Heart left ventricle (tissue), 16 donors: ENCODE measurements at regions of chr15 and their contacts with region 1.

Region 1: GRCh38 chr15:51793521-51794305 is 35.7 kb upstream of the TMOD3 start:
- DNase-seq: peak; percentile 49 to 73 (median 62)
- ATAC-seq: peak in 3 of 4 donors; percentile 39 to 68 (median 59)
- H3K4me3 ChIP-seq: no peak overlapping the region
- H3K27ac ChIP-seq: peak overlapping the region in 5 of 12 donors; percentile 14 to 32 (median 21)
- H3K4me1 ChIP-seq: peaks cover 0 to 19% (median 5%) of the 10 kb centered on the region in 12 donors
- H3K27me3 ChIP-seq: no peaks in the 10 kb centered on the region
- CTCF ChIP-seq: no peak
- POLR2A ChIP-seq: no peak

Region 2: GRCh38 chr15:51874751-51875528 is 81.2 kb after region 1 on chr15:
- intact Hi-C with region 1: loop called in 2 of 10 experiments (anchors 5 kb)
- DNase-seq: no peak
- ATAC-seq: peak; percentile 29 to 89 (median 78)
- H3K4me3 ChIP-seq: no peak overlapping the region
- H3K27ac ChIP-seq: peak overlapping the region in 9 of 12 donors; percentile 26 to 74 (median 39)
- H3K4me1 ChIP-seq: peaks cover 0 to 37% (median 25%) of the 10 kb centered on the region in 12 donors
- H3K27me3 ChIP-seq: no peaks in the 10 kb centered on the region
- CTCF ChIP-seq: no peak
- POLR2A ChIP-seq: no peak

Region 3: DNA sequence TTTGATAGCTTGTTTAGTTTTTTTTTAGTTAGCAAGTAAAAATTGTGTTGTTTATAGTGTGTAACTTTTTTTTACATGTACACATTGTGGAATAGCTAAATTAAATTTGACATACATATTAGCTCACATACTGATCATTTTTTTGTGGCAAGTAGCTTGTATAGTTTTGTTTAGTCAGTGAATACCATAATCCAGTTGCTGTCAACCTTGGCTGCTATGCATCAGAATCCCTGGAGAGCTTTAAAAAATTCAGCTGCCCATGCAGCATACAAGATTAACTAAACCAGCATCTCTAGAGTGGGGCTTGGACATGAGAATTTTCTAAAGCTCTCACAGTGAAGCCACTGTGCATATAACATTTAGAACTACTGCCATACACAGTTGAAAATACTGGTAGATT is 89.7 kb after region 1 on chr15:
- intact Hi-C with region 1: loop called in 2 of 10 experiments (anchors 5 kb)
- DNase-seq: no peak
- ATAC-seq: no peak
- H3K4me3 ChIP-seq: no peak overlapping the region
- H3K27ac ChIP-seq: no peak overlapping the region
- H3K4me1 ChIP-seq: peaks cover 0 to 43% (median 32%) of the 10 kb centered on the region in 12 donors
- H3K27me3 ChIP-seq: no peaks in the 10 kb centered on the region
- CTCF ChIP-seq: no peak
- POLR2A ChIP-seq: no peak

Region 4: GRCh38 chr15:51907136-51907914 is 113.6 kb after region 1 on chr15:
- intact Hi-C with region 1: loop called in 2 of 10 experiments (anchors 10 kb)
- DNase-seq: no peak
- ATAC-seq: peak in 1 of 4 donors; percentile 41
- H3K4me3 ChIP-seq: no peak overlapping the region
- H3K27ac ChIP-seq: no peak overlapping the region
- H3K4me1 ChIP-seq: no peaks in the 10 kb centered on the region
- H3K27me3 ChIP-seq: no peaks in the 10 kb centered on the region
- CTCF ChIP-seq: no peak
- POLR2A ChIP-seq: no peak